Psoas muscle (tissue), 8 donors: ENCODE measurements at regions of chr3 and their contacts with region 1.

Region 1: GRCh38 chr3:169744366-169745054 is 20.4 kb downstream of the TERC start:
- DNase-seq: no peak
- ATAC-seq: peak in 1 of 4 donors; percentile 57
- H3K4me3 ChIP-seq: no peak overlapping the region
- H3K27ac ChIP-seq: no peak overlapping the region
- H3K4me1 ChIP-seq: no peaks in the 10 kb centered on the region
- H3K27me3 ChIP-seq: peaks cover 0 to 21% (median 3%) of the 10 kb centered on the region in 3 donors
- CTCF ChIP-seq: peak; percentile 44

Region 2: GRCh38 chr3:168865022-168865551 is 879.4 kb before region 1 on chr3:
- intact Hi-C with region 1: loop called in 1 of 2 experiments (anchors 10 kb)
- DNase-seq: no peak
- ATAC-seq: no peak
- H3K4me3 ChIP-seq: peak overlapping the region; percentile 13
- H3K27ac ChIP-seq: no peak overlapping the region
- H3K4me1 ChIP-seq: no peaks in the 10 kb centered on the region
- H3K27me3 ChIP-seq: no peaks in the 10 kb centered on the region
- CTCF ChIP-seq: peak; percentile 61

Region 3: GRCh38 chr3:169052465-169053302 is 691.8 kb before region 1 on chr3:
- intact Hi-C with region 1: loop called in 1 of 2 experiments (anchors 5 kb)
- DNase-seq: no peak
- ATAC-seq: no peak
- H3K4me3 ChIP-seq: no peak overlapping the region
- H3K27ac ChIP-seq: no peak overlapping the region
- H3K4me1 ChIP-seq: no peaks in the 10 kb centered on the region
- H3K27me3 ChIP-seq: no peaks in the 10 kb centered on the region
- CTCF ChIP-seq: no peak

Region 4: DNA sequence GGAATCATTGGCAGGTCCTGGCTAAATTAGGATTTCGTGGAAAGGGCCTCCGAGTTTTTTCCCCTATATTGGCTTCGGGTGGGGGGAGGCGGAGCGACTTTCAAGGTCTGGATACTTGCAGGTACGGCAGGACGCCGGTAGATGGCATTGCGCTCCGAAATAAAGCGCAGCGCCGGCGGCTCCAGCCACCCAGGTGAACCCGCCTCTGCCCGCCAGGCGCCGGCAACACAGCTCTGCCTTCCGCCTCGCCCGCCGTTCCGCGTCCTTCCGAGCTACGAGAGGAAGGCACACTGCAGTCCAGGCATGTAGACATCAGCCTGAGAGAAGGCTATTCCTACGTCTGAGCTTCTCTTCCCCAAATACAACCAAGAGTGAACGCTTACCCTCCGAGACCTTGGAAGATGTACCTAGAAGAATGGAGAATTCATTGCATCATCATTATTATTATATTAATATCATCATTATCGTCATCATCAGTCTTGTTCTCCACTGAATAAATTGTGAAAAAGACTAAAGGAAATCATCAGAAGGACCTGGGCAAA is 595.1 kb before region 1 on chr3:
- intact Hi-C with region 1: loop called (anchors 5 to 10 kb)
- DNase-seq: peak; percentile 72 to 83
- ATAC-seq: peak; percentile 89 to 95 (median 92)
- H3K4me3 ChIP-seq: peak overlapping the region; percentile 38
- H3K27ac ChIP-seq: peak overlapping the region; percentile 11
- H3K4me1 ChIP-seq: peaks cover 6% of the 10 kb centered on the region
- H3K27me3 ChIP-seq: peaks cover 12 to 52% (median 13%) of the 10 kb centered on the region in 3 donors
- CTCF ChIP-seq: peak; percentile 83

Region 5: DNA sequence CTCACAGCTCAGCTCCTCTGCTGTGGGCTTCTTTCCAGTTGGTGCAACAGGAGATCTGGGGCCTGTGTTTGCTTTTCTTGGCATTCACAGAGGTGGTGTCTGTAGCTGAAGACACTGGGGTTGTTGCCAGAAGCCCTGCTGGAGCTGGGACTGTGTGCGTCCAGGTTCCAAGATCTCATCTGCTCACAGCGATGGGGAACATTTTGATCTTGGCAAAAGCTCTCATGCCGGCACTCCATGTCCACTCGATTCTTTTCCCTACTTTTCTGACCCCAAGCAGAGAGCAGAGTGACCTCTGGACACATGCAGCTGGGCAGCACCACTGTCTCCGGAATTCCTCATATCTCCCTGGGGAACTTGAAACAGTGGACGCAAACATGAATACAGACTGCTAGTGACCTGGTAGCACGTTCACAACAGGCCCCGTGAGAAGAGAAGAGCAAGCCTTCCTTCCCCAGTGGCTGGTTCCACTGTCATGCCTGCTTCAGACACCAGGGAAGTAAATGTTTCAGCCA is 44.9 kb before region 1 on chr3:
- intact Hi-C with region 1: no loop called
- DNase-seq: peak; percentile 66 to 91
- ATAC-seq: peak; percentile 73 to 95 (median 84)
- H3K4me3 ChIP-seq: peak overlapping the region; percentile 31
- H3K27ac ChIP-seq: peak overlapping the region; percentile 31
- H3K4me1 ChIP-seq: peaks cover 21% of the 10 kb centered on the region
- H3K27me3 ChIP-seq: no peaks in the 10 kb centered on the region
- CTCF ChIP-seq: no peak